Naive thymus-derived CD8-positive, alpha-beta T cell (primary cell): ENCODE measurements at regions of chr11 and their contacts with region 1.

Region 1: DNA sequence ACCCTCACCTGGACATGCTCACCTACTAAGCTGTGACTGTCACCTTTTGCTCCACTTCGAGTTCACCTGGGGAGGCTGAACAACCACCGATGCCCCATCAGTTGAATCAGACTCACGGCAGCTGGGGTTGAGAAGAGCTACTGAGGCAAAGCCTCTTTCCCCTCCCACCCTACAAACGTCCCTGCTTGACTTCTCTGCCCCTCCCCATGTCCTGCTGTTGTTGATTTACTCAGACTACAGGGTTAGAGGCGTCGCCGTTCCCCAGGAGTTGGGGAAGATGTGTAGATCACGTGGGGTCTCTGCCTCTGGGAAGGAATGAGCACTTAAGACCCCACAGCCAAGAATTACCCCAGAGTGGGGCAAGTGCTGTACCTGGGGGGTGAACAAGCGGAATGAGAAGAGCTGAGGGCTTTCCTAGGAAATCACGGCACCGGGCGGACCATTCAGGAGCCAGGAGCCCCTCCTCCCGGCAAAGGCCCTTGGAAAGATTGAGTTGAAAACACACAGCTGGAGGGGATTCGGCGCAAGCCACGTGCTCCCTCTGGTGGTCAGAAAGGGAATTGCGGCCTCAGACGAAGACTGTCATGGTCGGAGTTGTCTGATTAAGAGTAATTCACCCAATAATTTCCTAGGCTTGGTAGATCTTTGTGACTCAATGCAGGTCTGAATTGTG is 7.0 kb downstream of the FXYD2 start:
- DNase-seq: peak; percentile 66 to 88 (median 79)
- ATAC-seq: peak in 1 of 2 donors; percentile 16
- H3K4me3 Mint-ChIP-seq: peak overlapping the region in 9 of 10 donors; percentile 48 to 79 (median 64)
- H3K27ac Mint-ChIP-seq: peak overlapping the region; percentile 71 to 94 (median 86)
- H3K4me1 Mint-ChIP-seq: peaks cover 28 to 62% (median 52%) of the 10 kb centered on the region in 4 donors
- H3K27me3 Mint-ChIP-seq: no peaks in the 10 kb centered on the region

Region 2: GRCh38 chr11:117828611-117829368 is 11.3 kb after region 1 on chr11:
- POLR2A ChIA-PET with region 1: interaction called, 12 read pairs
- DNase-seq: peak; percentile 38 to 93 (median 62)
- ATAC-seq: peak; percentile 81 to 89
- H3K4me3 Mint-ChIP-seq: peak overlapping the region; percentile 15 to 76 (median 60)
- H3K27ac Mint-ChIP-seq: peak overlapping the region; percentile 71 to 90 (median 86)
- H3K4me1 Mint-ChIP-seq: peaks cover 40 to 85% (median 76%) of the 10 kb centered on the region in 4 donors
- H3K27me3 Mint-ChIP-seq: no peaks in the 10 kb centered on the region